Gastrocnemius medialis (tissue), 4 donors: ENCODE measurements at regions of chr6 and their contacts with region 1.

Region 1: DNA sequence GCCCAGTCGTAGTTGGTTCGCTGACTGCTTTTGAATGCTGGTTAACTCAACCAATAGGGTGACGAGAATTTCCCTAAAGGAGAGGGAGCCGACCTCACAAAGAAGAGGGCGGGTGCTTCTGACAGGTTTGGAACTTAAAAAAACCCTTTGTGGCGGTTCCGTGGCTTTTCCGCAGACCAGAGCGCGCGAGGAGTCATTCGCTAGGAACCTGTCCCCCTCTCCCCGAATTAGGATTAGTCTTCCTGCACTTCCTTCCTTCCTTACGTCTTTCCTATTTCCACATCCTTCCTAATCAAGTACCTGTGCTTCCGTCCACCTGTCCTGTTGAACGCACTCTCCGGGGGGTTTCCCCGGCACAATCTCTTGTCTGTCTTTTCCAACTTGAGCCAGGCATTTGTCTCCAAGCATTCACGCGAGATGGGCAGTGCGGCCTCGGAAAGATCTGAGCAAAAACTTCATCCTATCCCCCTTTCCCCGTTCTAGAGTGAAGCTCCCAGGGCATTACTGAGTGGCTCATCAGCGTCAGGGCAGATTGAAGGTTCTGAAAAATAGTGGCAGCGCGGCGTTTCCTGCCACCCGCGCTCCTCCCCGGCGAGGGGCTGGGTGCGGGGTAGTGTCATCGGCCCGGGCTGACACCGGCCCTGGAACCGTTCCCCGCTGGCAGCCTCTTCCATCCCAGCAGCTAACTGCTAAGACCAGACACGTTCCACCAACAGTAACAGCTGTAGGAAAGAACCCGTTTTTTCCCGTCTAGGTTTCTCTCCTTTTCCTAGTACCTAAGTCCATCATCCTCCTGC is 1.5 kb upstream of the STXBP5 start:
- DNase-seq: peak; percentile 81 to 87
- ATAC-seq: peak; percentile 90 to 95
- H3K4me3 ChIP-seq: peak overlapping the region; percentile 64 to 95 (median 82)
- H3K27ac ChIP-seq: peak overlapping the region; percentile 88 to 96 (median 93)
- H3K4me1 ChIP-seq: peaks cover 16% of the 10 kb centered on the region in 2 donors
- H3K27me3 ChIP-seq: no peaks in the 10 kb centered on the region
- CTCF ChIP-seq: no peak
- POLR2A ChIP-seq: peak; percentile 71 to 88

Region 2: DNA sequence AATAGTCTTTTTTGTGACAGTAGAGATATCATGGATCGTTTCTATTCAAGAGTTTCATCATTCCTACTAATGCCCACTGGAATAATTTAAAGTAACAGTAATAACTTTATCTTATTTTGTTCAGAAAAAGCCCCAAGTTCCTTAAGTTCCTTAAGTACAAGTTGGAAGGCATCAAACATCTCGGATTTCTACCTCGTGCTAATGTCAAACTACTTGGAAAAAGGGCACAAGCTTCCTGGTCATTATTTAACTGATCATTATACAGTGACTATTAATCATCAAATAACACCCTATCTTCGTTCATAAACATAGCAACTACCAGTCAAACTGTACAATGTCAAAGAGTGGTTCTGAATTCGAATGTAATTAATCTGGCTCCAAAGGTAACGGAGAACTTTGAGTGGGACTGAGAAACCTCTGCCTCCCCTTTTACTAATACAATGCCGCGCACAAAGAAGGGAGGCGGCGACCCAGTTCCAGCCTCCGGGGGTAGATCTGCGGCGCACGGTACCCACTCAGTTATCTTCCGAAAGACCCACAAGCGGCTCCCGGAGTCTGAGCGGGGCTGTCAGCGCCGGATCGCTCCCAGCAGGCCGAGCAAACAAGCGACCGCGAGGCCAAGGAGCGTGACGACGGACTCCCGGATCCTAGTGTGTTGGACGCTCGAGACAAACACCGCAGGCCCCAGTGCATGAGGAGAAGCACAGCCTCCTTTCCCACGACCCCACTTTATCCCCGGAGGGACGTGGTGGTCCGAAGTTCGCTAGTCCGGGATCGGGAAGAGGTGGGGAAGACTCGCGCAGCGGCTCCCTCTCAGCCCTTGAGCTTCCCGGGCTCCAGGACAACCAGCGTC is 1239.3 kb before region 1 on chr6:
- in situ Hi-C with region 1: no loop called
- intact Hi-C with region 1: loop called (anchors 5 kb)
- DNase-seq: peak in 1 of 2 donors; percentile 33
- ATAC-seq: peak; percentile 54 to 56
- H3K4me3 ChIP-seq: peak overlapping the region; percentile 77 to 90 (median 84)
- H3K27ac ChIP-seq: peak overlapping the region; percentile 86 to 96 (median 89)
- H3K4me1 ChIP-seq: peaks cover 30 to 33% of the 10 kb centered on the region in 2 donors
- H3K27me3 ChIP-seq: no peaks in the 10 kb centered on the region
- CTCF ChIP-seq: no peak
- POLR2A ChIP-seq: no peak

Region 3: DNA sequence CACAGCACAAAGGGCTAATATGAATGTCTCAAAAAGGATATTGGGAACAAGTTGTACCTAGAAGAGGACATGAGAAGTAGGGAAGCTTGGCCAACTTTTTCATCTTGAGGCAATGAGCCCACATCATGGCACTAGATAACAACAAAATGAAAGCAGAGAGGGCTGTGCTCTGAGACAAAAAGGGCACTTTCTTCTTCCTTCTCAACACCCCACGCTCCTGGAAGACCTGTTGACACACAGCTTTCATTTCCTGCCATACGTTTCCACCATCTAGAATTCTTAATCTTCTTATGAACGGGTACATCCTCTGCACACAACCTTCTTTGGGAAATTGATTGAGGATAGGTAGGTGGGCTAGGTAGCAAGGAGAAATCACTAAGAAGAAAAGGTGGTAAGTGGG is 186.3 kb before region 1 on chr6:
- in situ Hi-C with region 1: no loop called
- intact Hi-C with region 1: no loop called
- DNase-seq: no peak
- ATAC-seq: no peak
- H3K4me3 ChIP-seq: no peak overlapping the region
- H3K27ac ChIP-seq: no peak overlapping the region
- H3K4me1 ChIP-seq: no peaks in the 10 kb centered on the region
- H3K27me3 ChIP-seq: no peaks in the 10 kb centered on the region
- CTCF ChIP-seq: no peak
- POLR2A ChIP-seq: no peak